HEK293T (cell line): ENCODE measurements at regions of chr17 and their contacts with region 1.

Region 1: DNA sequence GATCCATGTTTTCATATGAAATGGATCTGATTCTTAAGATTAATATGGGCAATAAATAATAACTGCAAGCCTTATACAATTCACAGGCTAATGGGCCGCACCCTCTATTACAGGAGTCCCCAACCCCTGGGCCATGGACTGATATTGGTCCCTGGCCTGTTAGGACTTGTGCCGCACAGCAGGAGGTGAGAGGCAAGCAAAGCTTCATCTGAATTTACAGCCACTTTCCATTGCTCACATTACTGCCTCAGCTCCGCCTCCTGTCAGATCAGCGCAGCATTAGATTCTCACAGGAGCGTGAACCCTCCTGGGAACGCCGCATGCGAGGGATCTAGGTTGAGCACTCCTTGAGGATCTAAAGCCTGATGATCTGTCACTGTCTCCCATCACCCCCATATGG is 26.8 kb downstream of the METTL16 start:
- DNase-seq: peak; percentile 55

Region 2: DNA sequence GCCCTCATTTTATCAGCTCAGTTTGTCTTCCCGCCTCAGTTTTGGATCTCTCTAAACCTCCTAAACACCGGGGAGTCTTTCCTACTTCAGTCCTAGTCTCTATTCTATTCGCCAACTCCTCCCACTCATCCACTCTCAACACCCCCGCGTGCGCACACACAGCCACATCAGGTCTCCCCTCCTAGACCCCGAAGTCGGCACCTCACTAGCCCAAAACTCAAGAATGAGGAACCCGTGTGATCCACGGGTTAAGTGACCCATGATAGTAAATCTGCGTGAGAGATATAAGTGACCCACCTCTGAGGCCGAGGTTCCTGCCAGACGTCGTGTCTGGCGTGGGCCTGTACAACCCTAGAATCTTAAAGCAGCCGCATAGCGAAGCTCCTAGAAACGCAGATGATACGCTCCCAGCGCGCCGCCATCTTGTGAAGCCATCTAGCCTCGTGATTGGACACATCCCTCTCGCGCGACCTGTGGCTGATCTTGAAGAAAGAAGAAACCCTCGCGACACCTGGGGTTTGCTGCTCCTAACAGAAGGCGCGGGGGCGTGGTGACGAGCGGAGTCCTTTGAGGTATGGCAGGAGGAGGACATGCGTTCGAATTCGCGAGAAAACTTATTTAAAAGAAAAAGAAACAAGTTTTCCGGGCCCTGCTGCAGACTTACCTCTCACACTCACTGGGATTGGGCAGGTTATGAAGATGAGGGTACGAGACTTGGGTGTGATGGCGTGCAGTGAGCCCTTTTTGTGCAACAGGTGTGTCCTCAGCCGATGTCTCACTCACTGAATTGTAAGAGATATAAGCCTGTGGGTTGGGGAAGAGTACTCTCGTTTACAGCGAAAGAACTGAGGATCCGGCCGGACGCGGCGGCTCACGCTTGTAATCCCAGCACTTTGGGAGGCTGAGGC is 26.8 kb after region 1 on chr17 and contains the start of gene METTL16:
- CTCF ChIA-PET with region 1: no interaction called
- POLR2A ChIA-PET with region 1: interaction called, 26 read pairs
- DNase-seq: peak; percentile 95

Region 3: GRCh38 chr17:2547176-2547575 is 62.3 kb after region 1 on chr17:
- CTCF ChIA-PET with region 1: no interaction called
- POLR2A ChIA-PET with region 1: no interaction called
- DNase-seq: no peak